ENCODE measurements at regions of chr2 and their contacts with region 1.

Region 1: DNA sequence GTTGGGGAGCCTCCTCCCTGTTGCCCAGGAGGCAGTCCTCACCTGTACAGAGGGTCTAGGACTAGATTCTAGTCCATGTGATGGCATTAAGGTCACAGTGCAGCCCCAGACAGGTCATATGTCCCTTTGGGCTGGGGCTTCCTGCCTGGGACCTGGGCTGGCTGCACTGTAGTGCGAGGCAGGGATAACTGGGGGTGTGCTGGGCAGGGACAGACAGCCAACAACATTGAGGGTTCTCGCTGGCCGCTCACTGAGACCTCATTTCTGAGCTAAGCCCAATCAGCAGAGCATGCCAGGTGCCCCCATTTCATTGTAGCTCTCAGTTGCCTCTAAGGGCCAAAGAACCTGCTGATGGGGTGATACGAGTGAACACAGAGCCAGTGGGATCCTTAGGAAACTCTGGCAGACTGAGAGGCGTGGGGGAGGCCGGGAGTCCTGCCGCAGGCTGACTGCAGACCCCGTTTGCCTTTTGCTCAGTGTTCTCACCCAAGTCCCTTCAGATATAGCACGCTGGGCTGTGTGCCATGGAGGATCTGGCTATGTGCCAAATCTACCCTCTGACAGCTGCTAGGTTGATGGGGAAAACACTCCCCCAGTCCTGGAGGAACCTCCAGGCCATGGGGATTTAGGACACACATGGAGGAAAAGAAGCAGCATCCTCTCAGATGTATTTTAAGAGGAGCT is 51.9 kb downstream of the DYSF start:
- DNase-seq: peak; percentile 51 to 52
- ATAC-seq: peak in 5 of 8 donors; percentile 5 to 25 (median 12)
- H3K4me3 ChIP-seq: no peak overlapping the region
- H3K27ac ChIP-seq: peak overlapping the region in 9 of 10 donors; percentile 62 to 96 (median 89)
- H3K4me1 ChIP-seq: peaks cover 36 to 79% (median 58%) of the 10 kb centered on the region in 9 donors
- H3K27me3 ChIP-seq: no peaks in the 10 kb centered on the region
- CTCF ChIP-seq: no peak

Region 2: DNA sequence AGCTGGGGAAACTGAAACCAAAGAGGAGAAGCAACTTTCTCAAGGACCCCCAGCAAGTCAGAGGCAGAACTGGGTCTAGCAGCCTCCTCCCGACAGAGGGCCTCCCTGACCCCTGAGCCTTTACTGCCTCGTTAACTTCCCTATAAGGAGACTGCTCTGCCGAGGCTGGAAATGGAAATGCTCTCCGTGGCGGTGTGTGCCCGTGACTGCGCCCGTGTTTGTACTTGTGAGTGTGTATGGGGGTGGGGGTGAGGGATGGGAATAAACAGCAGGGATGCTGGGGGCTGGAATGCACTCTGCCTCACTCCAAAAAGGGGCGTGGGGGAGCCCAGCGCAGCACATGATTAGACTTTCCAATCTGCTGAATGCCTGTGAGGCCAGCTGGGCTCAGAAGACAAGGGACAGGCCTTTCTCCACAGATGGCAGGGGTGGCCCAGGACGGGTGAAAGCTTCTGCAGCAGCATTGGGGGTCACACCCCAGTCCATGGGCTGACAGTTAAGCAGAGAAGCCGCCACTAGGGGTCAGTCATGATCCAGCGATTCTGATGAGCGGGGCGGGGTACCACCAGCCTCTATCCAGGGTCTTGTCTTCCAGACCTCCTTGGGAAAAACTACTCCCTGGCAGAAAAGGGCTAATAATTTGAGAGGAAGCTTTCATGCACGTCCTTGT is 348.0 kb before region 1 on chr2:
- intact Hi-C with region 1: loop called in 2 of 10 experiments (anchors 5 to 10 kb)
- DNase-seq: peak; percentile 29 to 43
- ATAC-seq: peak; percentile 58 to 86 (median 71)
- H3K4me3 ChIP-seq: peak overlapping the region in 4 of 10 donors; percentile 5 to 26 (median 17)
- H3K27ac ChIP-seq: no peak overlapping the region
- H3K4me1 ChIP-seq: peaks cover 0 to 11% (median 5%) of the 10 kb centered on the region in 9 donors
- H3K27me3 ChIP-seq: no peaks in the 10 kb centered on the region
- CTCF ChIP-seq: peak; percentile 29 to 72 (median 63)

Region 3: GRCh38 chr2:71299507-71299906 is 205.7 kb before region 1 on chr2:
- intact Hi-C with region 1: loop called (anchors 2 to 10 kb)
- DNase-seq: no peak
- ATAC-seq: no peak
- H3K4me3 ChIP-seq: no peak overlapping the region
- H3K27ac ChIP-seq: no peak overlapping the region
- H3K4me1 ChIP-seq: peaks cover 0 to 6% (median 0%) of the 10 kb centered on the region in 9 donors
- H3K27me3 ChIP-seq: no peaks in the 10 kb centered on the region
- CTCF ChIP-seq: peak; percentile 46 to 77 (median 72)

Region 4: DNA sequence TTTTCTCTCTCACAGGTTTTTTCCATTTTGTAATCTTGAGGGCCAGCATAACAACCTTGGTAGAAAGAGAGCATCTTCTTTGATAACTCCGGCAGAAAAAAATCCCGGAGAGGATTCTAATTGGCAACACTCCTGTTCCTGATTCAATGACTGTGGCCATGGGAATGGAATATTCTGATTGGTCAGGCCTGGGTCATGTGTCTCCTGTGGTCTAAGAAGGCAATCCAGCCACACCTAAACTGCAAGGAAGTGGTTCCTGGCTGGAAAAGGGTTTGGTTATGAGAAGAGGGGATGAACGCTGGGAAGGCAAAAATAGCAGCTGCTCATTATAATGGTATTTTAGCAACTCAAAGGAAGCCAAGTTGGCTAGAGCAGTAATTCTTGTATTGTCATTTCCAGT is 198.5 kb before region 1 on chr2:
- intact Hi-C with region 1: loop called in 4 of 10 experiments (anchors 5 to 10 kb)
- DNase-seq: no peak
- ATAC-seq: peak; percentile 55 to 94 (median 81)
- H3K4me3 ChIP-seq: no peak overlapping the region
- H3K27ac ChIP-seq: peak overlapping the region in 6 of 10 donors; percentile 27 to 57 (median 40)
- H3K4me1 ChIP-seq: peaks cover 0 to 21% (median 0%) of the 10 kb centered on the region in 9 donors
- H3K27me3 ChIP-seq: no peaks in the 10 kb centered on the region
- CTCF ChIP-seq: no peak

Region 5: GRCh38 chr2:71336802-71337201 is 168.4 kb before region 1 on chr2:
- intact Hi-C with region 1: no loop called
- DNase-seq: no peak
- ATAC-seq: peak in 1 of 8 donors; percentile 13
- H3K4me3 ChIP-seq: no peak overlapping the region
- H3K27ac ChIP-seq: no peak overlapping the region
- H3K4me1 ChIP-seq: peaks cover 5 to 95% (median 80%) of the 10 kb centered on the region in 9 donors
- H3K27me3 ChIP-seq: no peaks in the 10 kb centered on the region
- CTCF ChIP-seq: no peak

Region 6: DNA sequence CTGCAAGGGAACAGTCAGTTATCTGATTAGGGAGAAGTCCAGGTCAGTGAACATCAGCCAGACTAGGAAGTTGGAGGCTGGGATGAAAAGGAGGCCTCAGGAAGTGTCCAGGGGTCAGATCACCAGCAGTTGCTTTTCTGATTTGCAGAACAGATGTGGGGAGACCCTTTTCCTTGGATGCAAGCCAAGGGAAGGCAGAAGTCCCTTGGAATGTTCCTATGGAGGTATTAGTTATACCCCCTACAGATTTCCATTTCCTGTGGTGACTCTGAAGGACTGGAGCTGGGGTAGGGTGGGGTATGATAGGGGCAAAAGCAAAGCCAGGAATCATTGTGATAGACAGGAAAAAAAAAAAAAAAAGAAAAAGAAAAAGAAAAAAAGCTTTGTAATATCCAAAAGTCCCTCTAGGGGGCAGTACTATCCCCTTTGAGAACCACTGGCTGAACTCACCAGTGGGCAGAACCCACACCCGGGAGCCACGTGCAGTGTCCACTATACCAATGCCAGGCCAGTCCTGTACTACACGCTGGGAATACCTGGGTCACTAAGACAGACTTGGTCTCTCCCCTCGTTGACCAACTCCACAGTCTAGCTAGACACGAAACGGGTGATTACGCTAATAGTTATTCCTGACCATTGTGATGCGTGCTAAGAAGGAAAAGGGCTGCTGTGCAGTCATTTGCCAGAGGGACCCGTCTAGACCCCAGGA is 44.5 kb before region 1 on chr2:
- intact Hi-C with region 1: loop called in 9 of 10 experiments (anchors 1 to 5 kb)
- DNase-seq: peak in 1 of 2 donors; percentile 41
- ATAC-seq: peak in 7 of 8 donors; percentile 13 to 45 (median 34)
- H3K4me3 ChIP-seq: no peak overlapping the region
- H3K27ac ChIP-seq: peak overlapping the region in 6 of 10 donors; percentile 17 to 92 (median 68)
- H3K4me1 ChIP-seq: peaks cover 15 to 93% (median 71%) of the 10 kb centered on the region in 9 donors
- H3K27me3 ChIP-seq: peaks cover 0 to 15% (median 0%) of the 10 kb centered on the region in 7 donors
- CTCF ChIP-seq: peak; percentile 58 to 78 (median 69)

Region 7: GRCh38 chr2:71466303-71467173 is 38.7 kb before region 1 on chr2:
- intact Hi-C with region 1: loop called (anchors 1 to 5 kb)
- DNase-seq: peak; percentile 49 to 71
- ATAC-seq: peak; percentile 67 to 81 (median 74)
- H3K4me3 ChIP-seq: peak overlapping the region; percentile 41 to 90 (median 78)
- H3K27ac ChIP-seq: peak overlapping the region; percentile 72 to 92 (median 90)
- H3K4me1 ChIP-seq: peaks cover 17 to 90% (median 58%) of the 10 kb centered on the region in 9 donors
- H3K27me3 ChIP-seq: peaks cover 0 to 26% (median 0%) of the 10 kb centered on the region in 7 donors
- CTCF ChIP-seq: peak in 1 of 9 donors; percentile 2